ENCODE measurements at regions of chr5 and their contacts with region 1.

Region 1: GRCh38 chr5:59786334-59786824 is 107.1 kb downstream of the PDE4D start:
- DNase-seq: peak; percentile 61 to 95
- H3K4me3 ChIP-seq: no peak overlapping the region
- H3K27ac ChIP-seq: peak overlapping the region; percentile 87
- H3K4me1 ChIP-seq: peaks cover 30% of the 10 kb centered on the region
- H3K27me3 ChIP-seq: no peaks in the 10 kb centered on the region
- CTCF ChIP-seq: no peak

Region 2: DNA sequence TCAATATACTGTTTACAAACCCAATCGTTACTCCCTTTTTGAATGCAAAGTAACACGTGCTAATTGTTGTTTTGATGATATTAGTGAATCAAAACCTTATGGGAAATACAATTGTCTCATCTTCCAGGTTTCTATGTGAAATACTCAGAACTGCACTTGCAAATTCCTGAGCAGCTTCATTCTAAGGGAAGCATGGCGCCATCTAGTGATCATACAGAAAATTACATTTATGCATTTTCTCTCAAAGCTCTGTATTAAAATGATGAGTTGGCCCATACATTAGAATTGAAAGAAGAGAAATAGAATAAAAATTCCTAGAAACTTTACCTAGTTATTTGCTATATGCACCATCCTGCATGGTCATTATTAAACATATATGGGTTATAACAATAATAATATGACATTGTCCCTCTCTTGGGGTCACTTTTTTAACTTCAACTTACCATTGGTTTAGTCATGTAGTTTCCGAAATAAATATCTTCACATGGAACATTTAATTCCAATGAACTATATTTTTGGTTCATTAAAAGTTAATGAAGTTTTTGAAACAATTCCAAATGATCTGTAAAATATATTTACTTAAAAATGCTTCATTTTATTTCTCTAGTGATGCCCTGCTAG is 112.8 kb before region 1 on chr5:
- CTCF ChIA-PET with region 1: no interaction called
- POLR2A ChIA-PET with region 1: no interaction called
- intact Hi-C with region 1: no loop called
- DNase-seq: peak in 1 of 2 experiments; percentile 61
- H3K4me3 ChIP-seq: no peak overlapping the region
- H3K27ac ChIP-seq: no peak overlapping the region
- H3K4me1 ChIP-seq: 0 out of 2 replicates have a peak, but pooled peaks cover 6% of the 10 kb centered on the region
- H3K27me3 ChIP-seq: no peaks in the 10 kb centered on the region
- CTCF ChIP-seq: peak; percentile 94

Region 3: GRCh38 chr5:59768152-59769040 is 18.0 kb before region 1 on chr5:
- CTCF ChIA-PET with region 1: interaction called, 4 read pairs
- POLR2A ChIA-PET with region 1: interaction called, 4 read pairs
- intact Hi-C with region 1: loop called (anchors 2 kb)
- DNase-seq: peak; percentile 58 to 76
- H3K4me3 ChIP-seq: peak overlapping the region; percentile 88
- H3K27ac ChIP-seq: peak overlapping the region; percentile 65
- H3K4me1 ChIP-seq: peaks cover 61% of the 10 kb centered on the region
- H3K27me3 ChIP-seq: no peaks in the 10 kb centered on the region
- CTCF ChIP-seq: no peak

Measured in PC-9 (cell line).